PC-3 (cell line): ENCODE measurements at regions of chr14 and their contacts with region 1.

Region 1: GRCh38 chr14:64726585-64726890 is 22.3 kb downstream of the PLEKHG3 start:
- DNase-seq: peak; percentile 96
- ATAC-seq: peak; percentile 98
- H3K4me3 ChIP-seq: peak overlapping the region; percentile 29; the same call in 1 of the 2 replicates
- H3K27ac ChIP-seq: peak overlapping the region; percentile 84
- H3K4me1 ChIP-seq: peaks cover 46% of the 10 kb centered on the region
- H3K27me3 ChIP-seq: no peaks in the 10 kb centered on the region
- CTCF ChIP-seq: no peak

Region 2: DNA sequence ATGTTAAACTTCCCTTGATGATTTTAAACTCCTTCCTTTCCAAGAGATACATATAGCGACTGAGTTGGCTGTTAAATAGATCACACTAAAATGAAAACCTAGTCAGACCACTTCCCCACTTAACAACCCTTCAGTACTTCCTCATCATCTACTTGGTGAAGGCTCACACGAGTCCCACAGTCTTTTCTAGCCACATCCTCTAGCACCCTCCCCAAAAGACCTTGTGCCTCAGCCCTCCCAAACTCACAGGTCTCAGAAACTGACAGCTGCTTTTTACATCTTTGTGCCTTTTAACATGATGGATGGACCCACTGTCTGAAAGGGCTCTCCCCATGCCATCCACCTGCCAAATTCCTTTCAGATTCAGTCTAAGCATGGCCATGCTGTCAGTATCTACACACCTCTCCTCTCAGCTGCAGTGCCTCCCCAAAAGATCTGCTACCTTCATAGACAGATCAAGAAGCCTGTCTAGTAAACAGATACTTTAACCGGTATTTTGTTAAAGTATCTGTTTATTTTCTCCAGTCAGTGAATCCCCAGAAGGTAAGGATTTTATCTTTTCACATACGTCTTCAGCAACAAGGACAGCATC is 1342.7 kb before region 1 on chr14:
- CTCF ChIA-PET with region 1: no interaction called
- POLR2A ChIA-PET with region 1: no interaction called
- intact Hi-C with region 1: no loop called
- DNase-seq: no peak
- ATAC-seq: no peak
- H3K4me3 ChIP-seq: no peak overlapping the region
- H3K27ac ChIP-seq: no peak overlapping the region
- H3K4me1 ChIP-seq: no peaks in the 10 kb centered on the region
- H3K27me3 ChIP-seq: no peaks in the 10 kb centered on the region
- CTCF ChIP-seq: no peak

Region 3: GRCh38 chr14:63922696-63923421 is 803.7 kb before region 1 on chr14:
- CTCF ChIA-PET with region 1: no interaction called
- POLR2A ChIA-PET with region 1: no interaction called
- intact Hi-C with region 1: no loop called
- DNase-seq: peak; percentile 42
- ATAC-seq: peak; percentile 74
- H3K4me3 ChIP-seq: no peak overlapping the region
- H3K27ac ChIP-seq: peak overlapping the region; percentile 21
- H3K4me1 ChIP-seq: peaks cover 9% of the 10 kb centered on the region; the same call in 1 of the 2 replicates
- H3K27me3 ChIP-seq: no peaks in the 10 kb centered on the region
- CTCF ChIP-seq: no peak

Region 4: DNA sequence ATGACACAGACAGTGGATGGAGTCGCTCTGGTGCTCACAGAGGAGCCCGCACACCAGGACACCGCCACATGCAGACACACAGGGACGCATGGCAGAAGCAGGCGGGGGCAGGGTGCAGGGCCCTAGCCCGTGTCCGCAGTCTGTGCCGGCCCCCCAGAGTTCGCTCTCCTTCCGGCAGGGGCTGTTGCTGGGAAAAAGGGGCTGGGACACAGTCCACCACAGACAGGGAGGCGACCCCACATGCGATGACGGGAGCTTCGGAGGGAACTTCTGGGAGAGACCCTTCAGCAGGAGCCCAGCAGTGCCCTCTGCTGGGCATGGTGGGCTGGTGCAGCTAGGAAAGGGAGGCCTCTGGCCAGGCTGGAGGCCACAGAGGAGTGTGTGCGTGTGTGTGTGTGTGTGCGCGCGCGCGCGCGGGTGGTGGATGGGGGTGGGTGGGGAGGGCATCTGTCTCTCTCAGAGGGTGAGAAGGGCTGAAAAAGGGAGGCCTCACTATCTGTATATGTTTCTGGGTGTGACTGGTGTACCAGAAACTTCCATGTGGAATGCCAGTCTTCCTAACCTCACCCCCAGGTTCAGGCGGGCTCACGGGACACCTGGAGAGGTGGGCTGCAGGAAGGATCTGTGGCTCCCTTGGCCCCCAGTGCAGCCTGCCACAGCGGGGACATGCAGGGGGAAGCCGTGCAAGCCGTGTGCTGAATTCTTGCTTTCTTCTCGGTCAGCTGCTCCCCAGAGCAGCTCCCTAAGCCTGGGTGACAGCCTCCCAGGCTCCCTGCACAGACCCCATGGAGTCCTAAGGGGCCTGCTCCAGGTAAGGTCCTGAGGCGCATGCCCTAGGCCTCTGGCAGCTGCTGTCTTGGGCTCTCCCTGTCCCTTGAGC is 38.3 kb after region 1 on chr14:
- CTCF ChIA-PET with region 1: interaction called, 6 read pairs
- POLR2A ChIA-PET with region 1: no interaction called
- intact Hi-C with region 1: loop called (anchors 1 kb)
- DNase-seq: peak; percentile 92
- ATAC-seq: peak; percentile 48
- H3K4me3 ChIP-seq: peak overlapping the region; percentile 31; the same call in 1 of the 2 replicates
- H3K27ac ChIP-seq: no peak overlapping the region
- H3K4me1 ChIP-seq: peaks cover 49% of the 10 kb centered on the region
- H3K27me3 ChIP-seq: no peaks in the 10 kb centered on the region
- CTCF ChIP-seq: peak; percentile 86

Region 5: GRCh38 chr14:65594153-65594881 is 867.8 kb after region 1 on chr14:
- CTCF ChIA-PET with region 1: no interaction called
- POLR2A ChIA-PET with region 1: interaction called, 10 read pairs
- intact Hi-C with region 1: no loop called
- DNase-seq: peak; percentile 76
- ATAC-seq: peak; percentile 95
- H3K4me3 ChIP-seq: peak overlapping the region; percentile 7; the same call in 1 of the 2 replicates
- H3K27ac ChIP-seq: peak overlapping the region; percentile 37
- H3K4me1 ChIP-seq: peaks cover 22% of the 10 kb centered on the region
- H3K27me3 ChIP-seq: no peaks in the 10 kb centered on the region
- CTCF ChIP-seq: no peak